ENCODE measurements at regions of chr1 and their contacts with region 1.

Region 1: DNA sequence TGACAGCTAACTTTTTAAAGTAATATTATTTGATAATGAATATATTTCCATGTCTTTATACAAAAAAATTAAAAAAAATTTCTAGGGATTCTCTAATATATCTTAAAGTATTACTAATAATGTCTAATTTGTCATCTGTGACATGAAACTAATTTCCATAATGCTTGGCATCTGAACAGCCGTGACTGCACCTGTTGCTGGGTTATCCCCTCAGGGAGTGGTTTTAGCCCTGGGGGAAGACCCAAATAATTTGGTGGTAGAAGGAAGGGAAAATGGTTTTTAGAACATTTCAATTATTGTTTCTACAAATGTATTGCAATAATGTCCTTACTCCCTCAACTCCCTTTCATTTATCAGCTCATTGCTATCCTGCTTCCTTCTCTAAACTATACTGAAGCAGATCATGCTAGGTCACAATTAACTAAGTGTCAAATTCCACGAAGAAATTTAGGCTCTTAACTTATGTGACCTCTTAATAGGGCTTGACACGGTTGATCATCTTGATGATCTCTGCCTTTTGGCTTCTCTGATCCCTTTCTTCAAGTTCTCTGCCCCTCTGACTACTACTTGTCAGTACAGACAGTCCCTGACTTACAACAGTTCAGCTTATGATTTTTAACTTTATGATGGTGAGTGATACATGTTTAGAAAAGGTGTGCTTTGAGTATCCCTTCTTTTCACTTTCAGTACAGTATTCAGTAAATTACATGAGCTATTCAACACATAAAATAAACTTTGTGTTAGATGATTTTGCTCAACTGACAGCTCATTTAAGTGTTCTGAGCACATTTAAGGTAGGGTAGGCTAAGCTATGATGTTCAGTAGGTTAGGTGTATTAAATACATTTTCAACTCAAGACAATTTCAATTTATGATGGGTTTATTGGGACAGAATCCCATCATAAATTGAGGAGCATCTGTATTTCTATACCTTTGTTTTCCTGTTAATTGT is 26.4 kb upstream of the DPH5 start:
- DNase-seq: peak; percentile 27
- ATAC-seq: peak; percentile 88
- H3K4me3 Mint-ChIP-seq: peak overlapping the region; percentile 78
- H3K27ac Mint-ChIP-seq: peak overlapping the region; percentile 95
- H3K4me1 Mint-ChIP-seq: peaks cover 70% of the 10 kb centered on the region
- H3K27me3 Mint-ChIP-seq: no peaks in the 10 kb centered on the region
- CTCF ChIP-seq: no peak

Region 2: DNA sequence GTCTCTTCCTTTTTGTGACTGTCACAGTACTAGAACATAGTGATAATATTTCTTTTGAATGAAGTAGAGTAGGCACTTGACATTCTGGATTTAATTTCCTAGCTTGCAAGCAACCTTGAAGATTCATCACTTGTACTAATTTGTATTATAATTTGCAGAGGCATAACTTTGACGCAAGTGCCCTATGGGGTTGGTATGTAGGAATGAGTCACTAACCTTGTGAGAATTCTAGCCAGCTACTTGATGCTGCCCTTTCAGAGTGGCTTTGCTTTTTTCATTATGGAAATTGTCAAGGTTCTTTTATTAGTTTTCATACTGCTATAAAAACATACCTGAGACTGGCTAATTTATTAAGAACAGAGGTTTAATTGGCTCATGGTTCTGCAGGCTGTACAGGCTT is 12.7 kb before region 1 on chr1:
- CTCF ChIA-PET with region 1: no interaction called
- POLR2A ChIA-PET with region 1: interaction called, 7 read pairs
- intact Hi-C with region 1: loop called (anchors 1 kb)
- DNase-seq: no peak
- ATAC-seq: no peak
- H3K4me3 Mint-ChIP-seq: no peak overlapping the region
- H3K27ac Mint-ChIP-seq: peak overlapping the region; percentile 64
- H3K4me1 Mint-ChIP-seq: peaks cover 56% of the 10 kb centered on the region
- H3K27me3 Mint-ChIP-seq: no peaks in the 10 kb centered on the region
- CTCF ChIP-seq: no peak

Region 3: DNA sequence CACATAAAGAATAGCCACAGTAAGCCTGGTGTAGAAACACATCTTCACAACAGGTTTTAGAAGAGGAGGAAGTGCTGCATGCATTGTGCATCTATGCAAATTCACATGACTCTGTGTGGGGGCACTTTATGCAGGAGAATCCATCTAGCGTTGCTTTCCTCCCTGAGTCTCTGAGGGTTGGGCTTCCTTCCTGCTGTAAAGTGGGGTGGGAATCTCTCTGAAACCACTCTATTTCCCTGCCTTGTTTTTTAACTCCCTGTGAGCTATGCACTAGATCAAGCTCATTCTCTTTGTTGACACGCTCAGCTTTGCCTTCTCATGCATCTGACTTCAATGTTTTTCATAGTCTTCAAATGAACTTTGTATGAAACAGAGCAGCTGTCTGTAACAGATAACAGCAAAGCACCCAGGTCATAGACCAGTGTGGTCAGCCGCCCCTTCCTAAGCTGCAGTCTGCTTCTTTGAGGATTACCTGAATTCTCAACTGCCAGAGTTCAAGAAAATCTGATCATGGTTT is 76.3 kb after region 1 on chr1:
- CTCF ChIA-PET with region 1: no interaction called
- POLR2A ChIA-PET with region 1: interaction called, 4 read pairs
- intact Hi-C with region 1: loop called (anchors 1 kb)
- DNase-seq: no peak
- ATAC-seq: peak; percentile 95
- H3K4me3 Mint-ChIP-seq: peak overlapping the region; percentile 55
- H3K27ac Mint-ChIP-seq: peak overlapping the region; percentile 87
- H3K4me1 Mint-ChIP-seq: peaks cover 62% of the 10 kb centered on the region
- H3K27me3 Mint-ChIP-seq: no peaks in the 10 kb centered on the region
- CTCF ChIP-seq: no peak

Region 4: GRCh38 chr1:101293461-101294051 is 241.6 kb after region 1 on chr1:
- CTCF ChIA-PET with region 1: interaction called, 5 read pairs
- POLR2A ChIA-PET with region 1: interaction called, 4 read pairs
- intact Hi-C with region 1: loop called (anchors 1 kb)
- DNase-seq: no peak
- ATAC-seq: peak; percentile 80
- H3K4me3 Mint-ChIP-seq: peak overlapping the region; percentile 47
- H3K27ac Mint-ChIP-seq: peak overlapping the region; percentile 88
- H3K4me1 Mint-ChIP-seq: peaks cover 60% of the 10 kb centered on the region
- H3K27me3 Mint-ChIP-seq: no peaks in the 10 kb centered on the region
- CTCF ChIP-seq: no peak

Measured in activated B cell treated with CpG ODN at 0.5 μM for 24 hours (primary cell).